B cell (primary cell): ENCODE measurements at regions of chr16 and their contacts with region 1.

Region 1: DNA sequence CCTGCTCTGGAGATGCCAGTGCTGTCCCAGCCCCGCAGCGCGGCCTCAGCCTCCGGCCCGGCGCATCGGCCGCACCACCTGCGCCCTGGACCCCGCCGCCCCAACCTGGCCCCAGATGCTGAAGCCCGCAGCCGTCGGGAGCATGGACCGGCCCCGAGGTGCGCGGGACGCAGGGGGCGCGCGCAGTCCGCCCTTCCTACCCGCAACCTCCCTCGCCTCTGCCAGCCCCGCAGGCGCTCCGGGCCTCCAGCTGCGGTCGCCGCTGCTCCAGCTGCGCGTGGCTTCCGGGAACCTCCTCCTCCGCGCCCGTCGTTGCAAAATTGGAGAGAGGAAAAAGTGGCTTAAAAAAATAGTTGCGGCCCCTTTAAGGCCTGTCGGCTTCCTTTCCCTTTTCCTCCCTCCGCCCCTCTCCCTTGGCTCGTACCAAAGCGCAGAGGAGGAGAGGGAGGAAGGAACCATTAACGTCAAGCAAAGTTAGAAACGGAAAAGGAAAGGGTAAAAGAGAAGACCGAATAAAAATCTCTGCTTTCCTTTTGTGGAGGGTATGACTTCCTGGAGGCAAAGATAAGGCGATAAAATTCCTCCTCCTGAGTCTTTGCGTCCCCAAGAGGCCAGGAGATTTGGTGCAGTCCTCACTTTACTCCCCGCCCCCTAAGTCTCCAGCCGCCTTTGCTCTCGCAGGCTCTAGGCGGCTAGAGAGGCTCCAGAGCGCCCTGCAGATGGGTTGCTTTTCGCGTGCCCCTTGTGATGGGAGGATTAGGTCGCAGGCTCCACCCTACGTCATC is at the start of gene CDIPT:
- DNase-seq: peak; percentile 98
- ATAC-seq: peak; percentile 97
- H3K4me3 ChIP-seq: peak within 1 kb of the TSS; percentile 67 to 92 (median 81)
- H3K4me3 Mint-ChIP-seq: peak within 1 kb of the TSS; percentile 96
- H3K27ac ChIP-seq: peak within 1 kb of the TSS; percentile 96 to 97
- H3K27ac Mint-ChIP-seq: peak within 1 kb of the TSS; percentile 99
- H3K4me1 ChIP-seq: peaks cover 14 to 19% of the 10 kb centered on the region in 2 donors
- H3K4me1 Mint-ChIP-seq: peaks cover 21% of the 10 kb centered on the region
- H3K27me3 ChIP-seq: no peaks in the 10 kb centered on the region
- H3K27me3 Mint-ChIP-seq: no peaks in the 10 kb centered on the region
- CTCF ChIP-seq: peak; percentile 55
- total RNA-seq, gene CDIPT: 49.2 and 51.2 TPM in 2 replicates

Region 2: GRCh38 chr16:29790183-29790952 is 72.7 kb before region 1 on chr16 and contains the start of gene KIF22:
- CTCF ChIA-PET with region 1: no interaction called
- POLR2A ChIA-PET with region 1: no interaction called
- intact Hi-C with region 1: loop called (anchors 1 kb)
- DNase-seq: peak; percentile 100
- ATAC-seq: peak; percentile 96
- H3K4me3 ChIP-seq: peak within 1 kb of the TSS; percentile 65 to 93 (median 78)
- H3K4me3 Mint-ChIP-seq: peak within 1 kb of the TSS; percentile 99
- H3K27ac ChIP-seq: peak within 1 kb of the TSS; percentile 75 to 77
- H3K27ac Mint-ChIP-seq: peak within 1 kb of the TSS; percentile 99
- H3K4me1 ChIP-seq: peaks cover 19 to 34% of the 10 kb centered on the region in 2 donors
- H3K4me1 Mint-ChIP-seq: peaks cover 34% of the 10 kb centered on the region
- H3K27me3 ChIP-seq: no peaks in the 10 kb centered on the region
- H3K27me3 Mint-ChIP-seq: no peaks in the 10 kb centered on the region
- CTCF ChIP-seq: peak; percentile 84
- total RNA-seq, gene KIF22: 53.5 and 53.9 TPM in 2 replicates

Region 3: DNA sequence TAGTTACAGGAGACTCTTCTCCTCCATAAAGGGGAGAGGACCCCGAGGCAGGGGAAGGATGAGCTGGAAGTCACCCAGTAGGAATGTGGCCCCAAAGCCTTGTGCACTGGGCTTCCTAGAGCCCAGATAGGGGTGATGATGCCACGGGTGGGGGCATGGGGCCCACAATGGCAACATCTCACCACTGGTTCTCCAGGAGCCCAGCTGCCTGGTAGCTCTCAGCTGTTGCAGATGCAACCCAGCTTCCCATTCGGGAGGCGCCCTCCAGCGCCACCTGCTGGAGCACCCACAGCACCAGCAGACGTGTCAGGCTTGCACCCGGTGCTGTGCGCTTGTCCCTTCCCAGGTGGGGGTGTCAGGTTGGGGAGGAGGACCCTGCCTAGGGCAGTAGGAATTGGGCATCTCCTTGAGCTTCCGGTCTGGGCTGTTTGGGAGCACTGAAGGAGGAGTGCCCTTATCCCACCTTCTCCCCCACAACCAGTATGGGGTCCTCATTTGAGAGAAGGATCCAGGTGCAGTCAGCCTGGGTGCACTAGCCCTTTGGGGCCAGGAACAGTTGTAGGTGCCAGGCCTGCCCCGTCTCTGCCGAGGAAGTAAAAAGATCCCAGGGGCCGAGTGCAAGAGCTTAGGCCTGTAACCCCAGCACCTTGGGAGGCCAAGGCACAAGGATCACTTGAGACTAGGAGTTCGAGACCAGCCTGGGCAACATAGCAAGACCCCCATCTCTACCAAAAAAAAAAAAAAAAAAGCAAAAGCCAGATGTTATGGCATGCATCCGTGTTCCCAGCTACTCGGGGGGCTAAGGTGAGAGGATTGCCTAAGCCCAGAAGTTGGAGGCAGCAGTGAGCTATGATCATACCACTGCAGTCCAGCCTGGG is 14.4 kb before region 1 on chr16:
- CTCF ChIA-PET with region 1: interaction called, 15 read pairs
- POLR2A ChIA-PET with region 1: no interaction called
- intact Hi-C with region 1: loop called (anchors 1 kb)
- DNase-seq: peak; percentile 75
- ATAC-seq: peak; percentile 79
- H3K4me3 ChIP-seq: no peak overlapping the region
- H3K4me3 Mint-ChIP-seq: no peak overlapping the region
- H3K27ac ChIP-seq: no peak overlapping the region
- H3K27ac Mint-ChIP-seq: no peak overlapping the region
- H3K4me1 ChIP-seq: no peaks in the 10 kb centered on the region
- H3K4me1 Mint-ChIP-seq: no peaks in the 10 kb centered on the region
- H3K27me3 ChIP-seq: no peaks in the 10 kb centered on the region
- H3K27me3 Mint-ChIP-seq: no peaks in the 10 kb centered on the region
- CTCF ChIP-seq: peak; percentile 78

Region 4: GRCh38 chr16:29926005-29926710 is 63.1 kb after region 1 on chr16 and contains the start of gene KCTD13:
- CTCF ChIA-PET with region 1: interaction called, 6 read pairs
- POLR2A ChIA-PET with region 1: no interaction called
- intact Hi-C with region 1: loop called (anchors 1 kb)
- DNase-seq: peak; percentile 94
- ATAC-seq: peak; percentile 91
- H3K4me3 ChIP-seq: peak within 1 kb of the TSS; percentile 48 to 95 (median 84)
- H3K4me3 Mint-ChIP-seq: peak within 1 kb of the TSS; percentile 91
- H3K27ac ChIP-seq: peak within 1 kb of the TSS; percentile 80 to 84
- H3K27ac Mint-ChIP-seq: peak within 1 kb of the TSS; percentile 96
- H3K4me1 ChIP-seq: peaks cover 14 to 21% of the 10 kb centered on the region in 2 donors
- H3K4me1 Mint-ChIP-seq: peaks cover 25% of the 10 kb centered on the region
- H3K27me3 ChIP-seq: no peaks in the 10 kb centered on the region
- H3K27me3 Mint-ChIP-seq: no peaks in the 10 kb centered on the region
- CTCF ChIP-seq: no peak
- total RNA-seq, gene KCTD13: 74.3 and 83.9 TPM in 2 replicates

Region 5: DNA sequence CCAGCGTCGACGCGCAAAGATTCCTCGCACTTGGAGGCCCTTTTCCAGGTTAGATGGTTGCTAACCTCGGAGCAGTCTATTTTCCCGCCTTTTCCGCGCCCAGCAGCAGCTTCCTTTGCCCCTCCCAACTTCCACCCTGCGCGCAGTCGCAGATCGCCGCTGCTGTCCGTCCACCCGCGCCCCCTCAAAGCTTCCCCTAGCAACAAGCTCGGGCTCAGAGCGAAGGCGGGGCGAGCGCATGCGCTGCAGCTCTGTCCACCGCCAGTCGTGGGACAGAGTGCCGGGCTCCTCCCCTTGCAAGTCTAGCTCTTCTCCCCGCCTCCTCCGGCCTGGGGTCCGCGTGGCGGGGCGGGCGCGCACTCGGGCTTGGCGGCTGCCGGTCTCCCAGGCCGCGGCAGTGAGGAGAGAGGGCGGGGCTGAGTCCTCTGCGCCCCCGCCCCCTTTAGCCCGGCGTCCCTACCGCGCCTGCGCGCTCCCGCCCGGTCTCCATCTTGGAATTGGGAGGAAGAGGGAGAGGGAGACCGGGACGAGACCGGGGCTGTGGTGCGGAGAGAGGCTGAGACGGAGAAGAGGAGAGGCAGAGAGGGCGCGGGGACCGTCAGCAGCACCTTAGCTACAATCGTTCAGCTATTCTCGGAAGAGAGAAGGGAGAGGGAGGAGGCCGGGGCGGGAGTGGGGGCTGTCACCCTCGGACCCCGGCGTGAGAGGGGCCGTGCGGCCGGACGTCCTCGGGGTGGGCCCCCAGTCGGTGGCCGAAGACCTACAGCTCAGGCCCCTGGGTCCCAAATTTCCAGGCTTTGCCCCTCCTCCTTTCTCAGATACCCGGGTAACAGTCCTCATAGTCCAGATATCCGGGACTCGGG is 110.5 kb after region 1 on chr16 and contains the start of gene TAOK2:
- CTCF ChIA-PET with region 1: no interaction called
- POLR2A ChIA-PET with region 1: interaction called, 3 read pairs
- intact Hi-C with region 1: loop called (anchors 1 kb)
- DNase-seq: peak; percentile 98
- ATAC-seq: peak; percentile 99
- H3K4me3 ChIP-seq: peak within 1 kb of the TSS; percentile 79 to 100 (median 99)
- H3K4me3 Mint-ChIP-seq: peak within 1 kb of the TSS; percentile 95
- H3K27ac ChIP-seq: peak within 1 kb of the TSS; percentile 73 to 79
- H3K27ac Mint-ChIP-seq: peak within 1 kb of the TSS; percentile 94
- H3K4me1 ChIP-seq: peaks cover 31 to 38% of the 10 kb centered on the region in 2 donors
- H3K4me1 Mint-ChIP-seq: peaks cover 36% of the 10 kb centered on the region
- H3K27me3 ChIP-seq: no peaks in the 10 kb centered on the region
- H3K27me3 Mint-ChIP-seq: no peaks in the 10 kb centered on the region
- CTCF ChIP-seq: no peak
- total RNA-seq, gene TAOK2: 50.8 and 51.9 TPM in 2 replicates

Region 6: GRCh38 chr16:30052671-30053372 is 189.7 kb after region 1 on chr16:
- CTCF ChIA-PET with region 1: no interaction called
- POLR2A ChIA-PET with region 1: no interaction called
- intact Hi-C with region 1: loop called (anchors 1 kb)
- DNase-seq: peak; percentile 92
- ATAC-seq: peak; percentile 87
- H3K4me3 ChIP-seq: peak overlapping the region; percentile 9 to 70 (median 63)
- H3K4me3 Mint-ChIP-seq: peak overlapping the region; percentile 87
- H3K27ac ChIP-seq: peak overlapping the region in 1 of 2 donors; percentile 5
- H3K27ac Mint-ChIP-seq: peak overlapping the region; percentile 82
- H3K4me1 ChIP-seq: peaks cover 5 to 12% of the 10 kb centered on the region in 2 donors
- H3K4me1 Mint-ChIP-seq: peaks cover 13% of the 10 kb centered on the region
- H3K27me3 ChIP-seq: peaks cover 0 to 3% (median 0%) of the 10 kb centered on the region in 4 experiments
- H3K27me3 Mint-ChIP-seq: no peaks in the 10 kb centered on the region
- CTCF ChIP-seq: no peak